ENCODE measurements at regions of chr15 and their contacts with region 1.

Region 1: GRCh38 chr15:52735231-52736089 is 54.7 kb downstream of the ONECUT1 start:
- DNase-seq: no peak
- ATAC-seq: peak; percentile 78

Region 2: GRCh38 chr15:52636459-52636858 is 99.0 kb before region 1 on chr15:
- intact Hi-C with region 1: loop called (anchors 10 kb)
- DNase-seq: no peak
- ATAC-seq: no peak

Measured in Right ventricle myocardium inferior (tissue), 1 donor.